Heart right ventricle (tissue), 16 donors: ENCODE measurements at regions of chr4 and their contacts with region 1.

Region 1: DNA sequence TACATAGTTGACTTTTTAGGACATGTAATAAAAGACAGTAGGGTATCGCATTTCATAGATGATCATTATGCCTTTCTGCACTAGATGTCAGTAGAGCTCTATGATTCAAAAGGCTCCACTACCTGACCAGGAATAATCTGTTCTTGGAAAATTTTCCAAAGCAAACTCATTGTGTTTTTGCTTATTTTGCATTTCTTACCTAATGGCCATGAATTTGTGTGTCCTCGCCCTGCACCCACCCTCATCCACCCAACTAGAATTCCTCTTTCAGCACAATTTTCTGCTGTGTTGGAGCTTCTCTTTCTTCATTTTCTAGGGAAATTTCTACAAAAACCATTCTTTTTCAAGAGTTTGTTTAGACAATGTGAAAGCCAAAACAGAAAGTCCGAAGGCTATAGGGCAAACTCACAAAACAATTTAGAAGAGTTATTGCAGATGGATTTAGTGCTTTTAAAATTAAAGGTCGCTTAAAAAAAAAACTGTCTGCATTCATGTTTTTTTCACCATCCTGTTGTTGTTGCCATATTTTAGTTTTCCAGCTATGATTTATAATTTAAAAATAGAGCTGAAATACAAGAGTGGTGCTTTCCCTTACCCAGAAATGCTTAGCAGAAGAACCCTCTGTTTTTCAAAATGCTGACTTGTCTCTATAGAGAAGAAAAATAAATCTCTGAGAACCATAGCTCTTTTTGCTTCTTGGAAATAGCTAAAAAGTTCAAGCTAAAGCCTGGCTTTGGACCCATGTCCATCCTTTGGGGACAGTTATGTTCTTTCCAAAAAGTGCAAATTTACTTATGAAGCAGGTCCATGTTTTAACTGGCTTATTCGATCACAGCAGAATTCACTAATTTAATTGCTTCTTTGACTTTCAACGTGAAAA is 183.7 kb downstream of the SPATA18 start:
- DNase-seq: no peak
- ATAC-seq: peak in 7 of 8 donors; percentile 73 to 87 (median 80)
- H3K4me3 ChIP-seq: no peak overlapping the region
- H3K27ac ChIP-seq: peak overlapping the region in 1 of 10 donors; percentile 29
- H3K4me1 ChIP-seq: peaks cover 0 to 8% (median 0%) of the 10 kb centered on the region in 9 donors
- H3K27me3 ChIP-seq: peaks cover 0 to 6% (median 0%) of the 10 kb centered on the region in 7 donors
- CTCF ChIP-seq: peak; percentile 20 to 76 (median 64)

Region 2: DNA sequence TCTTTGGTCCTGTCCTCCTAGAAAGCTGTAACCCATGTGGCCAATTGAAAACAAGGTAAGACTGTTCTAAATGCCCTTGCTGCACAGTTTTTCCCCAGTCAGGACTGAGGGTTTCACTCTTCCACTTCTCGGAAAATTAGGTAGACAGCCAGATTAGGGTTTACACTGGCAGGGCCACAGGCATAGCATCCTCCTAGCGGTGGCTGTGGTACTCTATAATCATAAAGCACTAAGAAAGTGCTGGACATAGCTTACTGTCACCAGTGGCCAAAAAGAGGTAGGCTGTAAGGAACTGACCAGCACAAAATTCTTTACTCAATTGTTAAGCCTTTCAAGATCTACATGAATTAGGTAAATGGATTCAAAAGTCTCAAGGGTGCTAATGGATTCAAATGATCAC is 435.9 kb after region 1 on chr4:
- intact Hi-C with region 1: loop called in 1 of 10 experiments (anchors 10 kb)
- DNase-seq: no peak
- ATAC-seq: no peak
- H3K4me3 ChIP-seq: no peak overlapping the region
- H3K27ac ChIP-seq: no peak overlapping the region
- H3K4me1 ChIP-seq: peaks cover 0 to 7% (median 0%) of the 10 kb centered on the region in 9 donors
- H3K27me3 ChIP-seq: peaks cover 0 to 6% (median 0%) of the 10 kb centered on the region in 7 donors
- CTCF ChIP-seq: no peak

Region 3: DNA sequence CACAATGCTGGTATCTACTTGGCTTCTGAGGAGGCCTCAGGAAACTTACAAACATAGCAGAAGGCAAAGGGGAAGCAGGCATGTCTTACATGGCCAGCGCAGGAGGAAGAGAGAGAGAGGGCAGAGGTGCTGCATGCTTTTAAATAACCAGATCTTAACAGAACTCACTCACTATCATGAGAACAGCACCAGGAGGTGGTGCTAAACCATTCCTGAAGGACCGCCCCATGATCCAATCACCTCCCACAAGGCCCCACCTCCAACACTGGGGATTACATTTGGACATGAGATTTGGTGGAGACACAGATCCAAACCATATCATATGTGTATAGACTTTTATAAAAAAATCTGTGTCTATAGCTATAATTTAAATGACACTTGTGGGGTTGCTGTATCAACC is 565.0 kb after region 1 on chr4:
- intact Hi-C with region 1: loop called in 1 of 10 experiments (anchors 10 kb)
- DNase-seq: no peak
- ATAC-seq: no peak
- H3K4me3 ChIP-seq: no peak overlapping the region
- H3K27ac ChIP-seq: no peak overlapping the region
- H3K4me1 ChIP-seq: no peaks in the 10 kb centered on the region
- H3K27me3 ChIP-seq: no peaks in the 10 kb centered on the region
- CTCF ChIP-seq: peak in 1 of 9 donors; percentile 5